ENCODE measurements at regions of chr3 and their contacts with region 1.

Region 1: DNA sequence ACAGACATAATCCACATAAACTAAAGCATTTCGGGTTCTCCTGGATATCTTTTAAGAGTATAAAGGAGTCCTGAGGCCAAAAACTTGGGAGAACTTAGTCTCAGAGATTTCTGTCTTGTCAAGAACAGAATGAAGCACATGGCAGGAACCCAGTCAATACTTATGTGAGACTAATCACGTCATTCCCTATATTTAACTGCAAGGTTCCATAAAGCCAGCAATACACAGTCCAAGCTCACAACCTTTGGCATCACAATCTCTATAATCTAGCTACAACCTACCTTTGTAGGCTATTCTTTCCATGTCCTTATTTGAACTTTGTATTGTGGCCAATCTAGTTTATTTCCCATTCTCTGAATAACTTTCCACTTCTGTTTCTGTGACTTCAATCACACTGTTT is 68.9 kb upstream of the CSPG5 start:
- DNase-seq: no peak
- H3K4me3 Mint-ChIP-seq: no peak overlapping the region
- H3K27ac Mint-ChIP-seq: no peak overlapping the region
- H3K4me1 Mint-ChIP-seq: no peaks in the 10 kb centered on the region
- H3K27me3 Mint-ChIP-seq: no peaks in the 10 kb centered on the region

Region 2: DNA sequence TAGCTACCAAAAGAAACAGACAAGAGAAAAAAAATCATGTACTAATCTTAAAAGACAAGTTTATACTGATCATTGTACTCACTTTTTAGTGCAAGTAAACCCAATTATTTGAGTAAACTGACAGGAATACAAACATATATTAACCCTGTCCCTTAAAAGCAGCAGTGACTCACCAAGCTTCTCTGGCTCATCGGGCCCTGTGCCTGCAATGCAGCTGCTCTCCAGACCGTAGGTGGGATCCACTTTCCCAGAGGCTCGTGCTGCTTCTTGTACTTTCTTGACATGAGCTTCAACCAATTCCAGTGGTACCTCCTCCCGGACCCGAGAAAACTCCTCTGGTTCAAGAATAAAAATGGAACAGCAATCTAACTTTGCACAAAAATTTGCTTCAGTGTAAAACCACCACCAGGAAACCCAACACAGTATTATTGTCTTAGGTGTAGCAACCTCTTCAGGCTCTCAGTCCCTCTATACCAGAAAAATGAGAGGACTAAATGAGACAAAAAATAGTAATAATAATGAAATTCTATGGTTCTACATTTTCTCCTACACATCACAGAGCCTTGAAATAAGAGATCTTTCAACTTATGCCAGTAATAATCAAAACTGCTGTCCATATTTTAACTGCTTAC is 13.7 kb after region 1 on chr3:
- CTCF ChIA-PET with region 1: interaction called, 11 read pairs
- POLR2A ChIA-PET with region 1: no interaction called
- DNase-seq: no peak
- H3K4me3 Mint-ChIP-seq: no peak overlapping the region
- H3K27ac Mint-ChIP-seq: no peak overlapping the region
- H3K4me1 Mint-ChIP-seq: no peaks in the 10 kb centered on the region
- H3K27me3 Mint-ChIP-seq: no peaks in the 10 kb centered on the region

Measured in activated CD4-positive, alpha-beta T cell treated with anti-CD3 and anti-CD28 coated beads, Interleukin-2, amount 10 ng/mL, durations not matched to agents 7 days and 5 days (primary cell).